ENCODE measurements at regions of chr13 and their contacts with region 1.

Region 1: DNA sequence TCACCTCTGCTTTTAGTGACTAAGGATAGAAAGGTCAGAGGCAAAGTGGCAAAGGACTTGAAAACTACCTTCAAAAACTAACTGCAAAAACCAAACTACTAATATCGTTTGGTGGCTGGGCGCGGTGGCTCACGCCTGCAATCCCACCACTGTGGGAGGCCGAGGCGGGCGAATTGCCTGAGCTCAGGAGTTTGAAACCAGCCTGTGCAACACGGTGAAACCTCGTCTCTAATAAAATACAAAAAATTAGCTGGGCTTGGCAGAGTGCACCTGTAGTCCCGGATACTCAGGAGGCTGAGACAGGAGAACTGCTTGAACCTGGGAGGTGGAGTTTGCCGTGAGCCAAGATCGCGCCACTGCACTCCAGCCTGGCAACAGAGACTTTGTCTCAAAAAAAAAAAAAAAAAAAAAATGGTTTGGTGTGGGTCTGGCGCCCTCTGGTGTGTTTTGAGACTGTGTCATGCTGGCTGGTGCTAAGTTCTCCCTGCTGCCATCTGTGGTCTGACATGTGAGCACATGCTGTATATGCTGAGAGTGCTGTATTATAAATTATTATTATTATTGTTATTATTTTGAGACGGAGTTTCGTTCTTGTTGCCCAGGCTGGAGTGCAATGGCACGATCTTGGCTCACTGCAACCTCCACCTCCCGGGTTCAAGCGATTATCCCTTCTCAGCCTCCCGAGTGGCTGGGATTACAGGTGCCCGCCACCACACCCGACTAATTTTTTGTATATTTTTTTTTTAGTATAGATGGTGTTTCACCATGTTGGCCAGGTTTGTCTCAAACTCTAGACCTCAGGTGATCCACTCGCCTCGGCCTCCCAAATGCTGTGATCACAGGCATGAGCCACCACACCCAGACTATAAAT is 36.0 kb upstream of the RNF17 start:
- DNase-seq: no peak
- ATAC-seq: peak; percentile 88 to 97 (median 95)
- H3K4me3 ChIP-seq: no peak overlapping the region
- H3K27ac ChIP-seq: no peak overlapping the region
- H3K4me1 ChIP-seq: no peaks in the 10 kb centered on the region
- H3K27me3 ChIP-seq: peaks cover 0 to 8% (median 0%) of the 10 kb centered on the region in 3 donors
- CTCF ChIP-seq: peak; percentile 72

Region 2: GRCh38 chr13:24683838-24684599 is 43.9 kb before region 1 on chr13:
- intact Hi-C with region 1: loop called in 1 of 2 experiments (anchors 2 kb)
- DNase-seq: peak; percentile 48 to 63
- ATAC-seq: peak; percentile 65 to 87 (median 82)
- H3K4me3 ChIP-seq: no peak overlapping the region
- H3K27ac ChIP-seq: no peak overlapping the region
- H3K4me1 ChIP-seq: no peaks in the 10 kb centered on the region
- H3K27me3 ChIP-seq: peaks cover 0 to 36% (median 12%) of the 10 kb centered on the region in 3 donors
- CTCF ChIP-seq: peak; percentile 77

Measured in psoas muscle (tissue), 8 donors.